ENCODE measurements at regions of chr17 and their contacts with region 1.

Region 1: GRCh38 chr17:43467981-43468581 is 15.7 kb upstream of the DHX8 start:
- DNase-seq: peak; percentile 55
- H3K4me3 Mint-ChIP-seq: peak overlapping the region; percentile 9
- H3K27ac Mint-ChIP-seq: peak overlapping the region; percentile 88
- H3K4me1 Mint-ChIP-seq: peaks cover 27% of the 10 kb centered on the region
- H3K27me3 Mint-ChIP-seq: no peaks in the 10 kb centered on the region
- CTCF ChIP-seq: no peak

Region 2: DNA sequence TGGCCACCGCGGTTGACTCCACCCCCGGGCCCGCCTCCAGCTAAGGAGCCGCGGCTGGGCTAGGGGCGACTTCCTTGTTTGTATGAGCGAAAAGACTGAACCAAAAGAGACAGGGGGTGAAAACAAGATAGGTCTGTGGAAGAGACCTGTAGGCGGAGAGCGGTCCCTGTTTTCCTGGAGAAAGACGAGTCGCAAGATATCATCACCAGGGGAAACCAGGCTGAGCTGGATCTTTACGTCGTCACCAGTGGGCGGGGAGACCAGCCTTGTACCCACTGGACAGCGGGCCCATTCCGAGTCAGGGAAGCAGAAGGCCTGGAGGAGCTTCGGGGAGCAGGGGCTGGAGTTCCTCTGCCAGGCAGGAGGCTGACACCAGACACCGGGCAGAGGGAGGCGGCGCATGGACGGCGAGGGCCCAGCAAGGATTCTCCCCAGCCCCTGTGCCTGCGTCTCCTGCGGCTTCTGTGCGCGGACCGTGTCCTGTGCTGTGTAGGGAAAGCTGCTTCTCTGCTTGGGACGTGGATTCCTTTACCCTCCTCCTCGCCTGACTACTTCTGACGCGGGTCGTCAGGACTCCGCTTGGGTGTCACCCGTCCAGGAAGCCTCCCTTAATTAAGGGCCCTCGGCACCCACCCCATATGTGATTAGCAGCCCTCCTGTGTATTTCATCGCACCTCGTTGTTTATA is 79.6 kb before region 1 on chr17:
- CTCF ChIA-PET with region 1: interaction called, 40 read pairs
- POLR2A ChIA-PET with region 1: interaction called, 640 read pairs
- intact Hi-C with region 1: no loop called
- DNase-seq: peak; percentile 94
- H3K4me3 Mint-ChIP-seq: peak overlapping the region; percentile 83
- H3K27ac Mint-ChIP-seq: peak overlapping the region; percentile 97
- H3K4me1 Mint-ChIP-seq: peaks cover 18% of the 10 kb centered on the region
- H3K27me3 Mint-ChIP-seq: no peaks in the 10 kb centered on the region
- CTCF ChIP-seq: no peak

Region 3: DNA sequence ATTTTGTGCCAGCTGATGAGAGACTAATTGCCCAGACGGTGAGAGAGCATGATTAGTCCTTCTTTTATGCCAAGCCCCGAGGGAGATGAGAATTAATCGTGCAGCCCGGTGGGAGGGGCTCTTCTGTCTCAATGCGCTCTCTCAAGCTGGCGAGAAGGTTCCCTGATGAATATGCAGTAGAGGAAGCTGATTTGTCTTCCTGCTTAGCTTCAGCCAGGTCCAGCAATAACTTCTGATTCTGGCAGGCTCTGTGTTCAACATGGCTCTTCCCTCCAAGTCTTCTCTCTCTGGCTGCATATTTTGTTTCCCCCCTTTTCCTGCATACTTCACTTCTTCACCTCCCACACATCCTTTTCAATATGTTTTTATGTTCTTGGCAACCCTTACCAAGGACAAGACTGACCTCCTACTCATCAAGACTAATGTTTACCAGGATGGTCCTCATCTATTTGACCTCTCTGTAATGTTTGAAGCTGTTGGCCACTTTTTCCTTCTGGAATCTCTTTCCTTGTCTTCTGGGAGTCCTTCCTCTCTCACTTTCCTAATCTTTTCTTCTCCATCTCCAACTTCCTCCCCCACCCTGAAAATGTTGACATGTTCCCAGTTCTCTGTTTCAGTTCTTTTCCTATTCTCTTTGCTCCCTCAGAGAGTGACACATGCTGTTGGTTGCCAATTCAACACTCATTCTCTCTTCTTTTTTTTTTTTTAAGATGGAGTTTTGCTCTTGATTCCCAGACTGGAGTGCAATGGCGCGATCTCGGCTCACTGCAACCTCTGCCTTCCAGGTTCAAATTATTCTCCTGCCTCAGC is 36.2 kb before region 1 on chr17:
- CTCF ChIA-PET with region 1: interaction called, 5 read pairs
- POLR2A ChIA-PET with region 1: interaction called, 9 read pairs
- intact Hi-C with region 1: loop called (anchors 5 kb)
- DNase-seq: peak; percentile 29
- H3K4me3 Mint-ChIP-seq: no peak overlapping the region
- H3K27ac Mint-ChIP-seq: no peak overlapping the region
- H3K4me1 Mint-ChIP-seq: peaks cover 40% of the 10 kb centered on the region
- H3K27me3 Mint-ChIP-seq: no peaks in the 10 kb centered on the region
- CTCF ChIP-seq: no peak

Region 4: GRCh38 chr17:43449470-43450248 is 18.4 kb before region 1 on chr17:
- CTCF ChIA-PET with region 1: interaction called, 8 read pairs
- POLR2A ChIA-PET with region 1: interaction called, 161 read pairs
- intact Hi-C with region 1: no loop called
- DNase-seq: peak; percentile 82
- H3K4me3 Mint-ChIP-seq: no peak overlapping the region
- H3K27ac Mint-ChIP-seq: peak overlapping the region; percentile 68
- H3K4me1 Mint-ChIP-seq: peaks cover 17% of the 10 kb centered on the region
- H3K27me3 Mint-ChIP-seq: no peaks in the 10 kb centered on the region
- CTCF ChIP-seq: no peak

Region 5: DNA sequence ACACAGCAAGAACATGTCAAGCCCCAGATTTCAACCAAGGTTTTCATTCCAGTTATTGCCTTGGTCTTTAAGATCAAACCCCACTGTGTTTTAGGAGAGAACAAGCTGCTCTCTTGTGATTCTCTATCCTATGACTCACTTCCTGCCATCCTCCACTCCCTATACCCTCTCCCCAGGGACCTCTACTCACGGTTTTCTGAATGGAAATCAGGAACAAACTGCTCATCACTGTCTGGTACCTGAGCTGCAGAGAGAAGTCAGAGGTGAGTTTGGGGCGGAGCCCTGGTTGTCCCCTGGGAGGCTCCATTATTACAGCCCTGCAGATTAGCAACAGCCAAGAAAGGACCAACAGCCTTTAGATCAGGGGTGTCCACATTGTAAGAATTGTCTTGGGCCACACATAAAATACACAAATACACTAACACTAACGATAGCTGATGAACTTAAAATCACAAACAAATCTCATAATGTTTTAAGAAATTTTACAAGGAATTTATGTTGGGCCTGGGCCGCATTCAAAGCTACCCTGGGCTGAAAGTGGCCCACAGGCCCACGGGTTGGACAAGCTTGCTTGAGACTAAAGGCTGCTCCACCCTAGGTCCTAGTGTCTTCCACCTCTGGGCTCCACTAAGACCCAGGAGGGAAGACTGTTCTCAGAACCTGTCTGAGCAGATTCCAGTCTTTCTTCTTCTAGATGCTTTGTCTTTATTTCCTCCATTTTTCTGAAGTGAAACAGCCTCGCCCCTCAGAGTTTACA is 68.3 kb after region 1 on chr17:
- CTCF ChIA-PET with region 1: no interaction called
- POLR2A ChIA-PET with region 1: no interaction called
- intact Hi-C with region 1: no loop called
- DNase-seq: peak; percentile 65
- H3K4me3 Mint-ChIP-seq: peak overlapping the region; percentile 8
- H3K27ac Mint-ChIP-seq: peak overlapping the region; percentile 52
- H3K4me1 Mint-ChIP-seq: peaks cover 15% of the 10 kb centered on the region
- H3K27me3 Mint-ChIP-seq: no peaks in the 10 kb centered on the region
- CTCF ChIP-seq: no peak

Region 6: DNA sequence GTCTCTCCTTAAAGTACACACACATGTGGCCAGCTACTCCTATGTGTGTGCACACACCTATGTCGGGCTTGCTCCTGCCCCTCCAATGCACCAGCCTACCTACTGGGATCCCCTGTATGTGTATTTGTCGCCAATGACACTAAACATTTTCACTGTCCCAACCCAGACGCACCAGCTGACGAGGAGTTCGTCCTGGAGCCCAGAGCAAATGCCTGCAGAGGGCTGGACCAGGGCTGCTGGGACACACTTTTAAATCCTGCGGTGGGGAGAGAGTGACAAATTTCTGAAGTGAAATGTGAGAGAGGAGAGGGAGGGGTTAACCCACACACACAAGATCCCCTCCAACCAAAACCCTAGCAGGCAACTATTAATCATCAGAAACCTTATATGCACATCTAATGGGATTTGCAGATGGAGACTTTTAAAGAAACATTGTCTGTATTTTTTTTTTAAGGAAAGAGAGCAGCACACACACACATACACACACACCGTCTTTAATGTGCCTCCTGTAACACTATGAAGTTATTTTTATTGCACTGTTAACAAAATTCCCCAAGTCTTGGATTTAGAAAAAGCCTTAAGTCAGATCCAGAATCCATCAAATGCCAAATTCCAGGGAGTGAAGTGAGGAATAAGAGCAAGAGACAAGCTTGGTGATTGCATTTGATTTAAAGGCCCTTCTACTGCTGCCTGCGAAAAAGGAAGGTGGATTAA is 193.8 kb after region 1 on chr17 and contains the start of gene MEOX1:
- CTCF ChIA-PET with region 1: no interaction called
- POLR2A ChIA-PET with region 1: no interaction called
- intact Hi-C with region 1: no loop called
- DNase-seq: peak; percentile 66
- H3K4me3 Mint-ChIP-seq: no peak within 1 kb of the TSS
- H3K27ac Mint-ChIP-seq: no peak within 1 kb of the TSS
- H3K4me1 Mint-ChIP-seq: peaks cover 6% of the 10 kb centered on the region
- H3K27me3 Mint-ChIP-seq: no peaks in the 10 kb centered on the region
- CTCF ChIP-seq: no peak
- total RNA-seq, gene MEOX1: not detected in 2 replicates